ENCODE measurements at regions of chr1 and their contacts with region 1.

Region 1: DNA sequence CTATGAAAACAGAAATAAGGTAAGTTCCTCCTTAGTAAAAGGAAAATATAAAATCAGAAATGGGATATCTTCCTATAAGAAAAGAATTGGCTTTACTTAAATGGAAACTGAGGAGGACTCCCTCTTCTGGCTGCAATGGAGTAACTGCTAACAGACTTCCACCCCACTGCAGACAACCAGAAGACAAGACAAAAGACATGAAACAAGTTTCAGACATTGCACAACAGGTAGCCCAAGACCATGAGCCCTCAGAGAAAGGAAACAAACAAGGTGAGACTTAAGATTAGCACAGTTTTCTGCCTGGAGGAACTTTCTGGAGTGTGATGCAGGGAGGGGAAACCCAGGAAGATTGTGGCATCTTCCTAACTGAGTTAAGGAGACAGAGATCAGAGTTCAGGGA is 17.0 kb upstream of the OLFML2B start:
- DNase-seq: peak; percentile 67
- H3K4me3 Mint-ChIP-seq: no peak overlapping the region
- H3K27ac Mint-ChIP-seq: no peak overlapping the region
- H3K4me1 Mint-ChIP-seq: peaks cover 6% of the 10 kb centered on the region
- H3K27me3 Mint-ChIP-seq: no peaks in the 10 kb centered on the region
- CTCF ChIP-seq: peak; percentile 23

Region 2: DNA sequence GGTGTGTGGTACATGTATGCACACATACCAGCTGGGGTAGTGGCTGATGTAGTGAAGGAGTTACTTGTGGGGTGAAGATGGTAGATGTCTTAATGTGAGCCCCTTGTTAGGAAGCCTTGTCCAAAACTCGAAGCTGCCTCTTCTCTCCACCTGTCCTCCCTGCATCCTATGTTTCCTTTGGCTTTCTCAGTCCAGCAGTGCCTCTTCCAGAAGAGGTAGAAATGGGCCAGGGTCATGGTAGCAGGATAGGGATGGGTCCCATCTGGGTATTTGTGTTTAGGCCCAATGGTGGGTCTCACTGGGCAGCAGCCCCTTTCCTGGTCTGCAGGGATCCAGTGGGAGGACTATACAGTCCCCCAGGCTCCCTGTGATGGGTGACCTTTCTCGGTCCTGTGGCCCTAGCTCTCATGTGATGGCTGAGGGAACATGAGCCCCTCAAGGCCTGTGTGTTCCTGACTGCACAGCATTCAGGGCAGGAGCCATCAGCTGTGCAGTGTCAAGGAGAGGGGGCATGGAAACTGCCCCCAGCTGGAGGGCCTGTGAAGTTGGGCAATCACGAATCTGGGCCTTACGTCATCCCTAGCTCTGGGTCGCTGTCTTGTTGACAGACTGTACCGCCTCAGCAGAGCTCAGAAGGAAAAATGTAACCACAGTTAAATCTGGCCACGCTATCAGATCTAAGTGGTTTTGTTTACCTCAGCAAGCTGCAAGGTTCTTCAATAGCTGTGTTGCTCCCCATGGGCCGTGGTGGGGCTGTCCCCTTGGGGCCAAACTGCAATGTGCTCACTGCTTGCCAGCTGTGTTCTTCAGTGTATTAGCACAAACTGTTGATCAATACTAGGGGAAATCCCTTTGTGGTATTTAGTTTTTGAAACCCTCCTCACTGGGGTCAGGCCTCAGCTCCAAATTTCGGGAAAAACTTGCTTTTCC is 111.5 kb after region 1 on chr1:
- CTCF ChIA-PET with region 1: no interaction called
- POLR2A ChIA-PET with region 1: no interaction called
- intact Hi-C with region 1: no loop called
- DNase-seq: peak; percentile 14
- H3K4me3 Mint-ChIP-seq: no peak overlapping the region
- H3K27ac Mint-ChIP-seq: no peak overlapping the region
- H3K4me1 Mint-ChIP-seq: no peaks in the 10 kb centered on the region
- H3K27me3 Mint-ChIP-seq: no peaks in the 10 kb centered on the region
- CTCF ChIP-seq: no peak

Region 3: GRCh38 chr1:162406811-162407210 is 366.1 kb after region 1 on chr1:
- CTCF ChIA-PET with region 1: interaction called, 10 read pairs
- POLR2A ChIA-PET with region 1: no interaction called
- intact Hi-C with region 1: no loop called
- DNase-seq: no peak
- H3K4me3 Mint-ChIP-seq: no peak overlapping the region
- H3K27ac Mint-ChIP-seq: no peak overlapping the region
- H3K4me1 Mint-ChIP-seq: peaks cover 16% of the 10 kb centered on the region
- H3K27me3 Mint-ChIP-seq: no peaks in the 10 kb centered on the region
- CTCF ChIP-seq: no peak

Measured in MCF 10A (cell line).